PC-3 (cell line): ENCODE measurements at regions of chr17 and their contacts with region 1.

Region 1: GRCh38 chr17:48153691-48154358 is 46.3 kb downstream of the SNX11 start:
- DNase-seq: peak; percentile 64
- ATAC-seq: peak; percentile 85
- H3K4me3 ChIP-seq: no peak overlapping the region
- H3K27ac ChIP-seq: no peak overlapping the region
- H3K4me1 ChIP-seq: no peaks in the 10 kb centered on the region
- H3K27me3 ChIP-seq: peaks cover 41% of the 10 kb centered on the region
- CTCF ChIP-seq: peak; percentile 86

Region 2: GRCh38 chr17:48074315-48075081 is 79.3 kb before region 1 on chr17:
- CTCF ChIA-PET with region 1: no interaction called
- POLR2A ChIA-PET with region 1: no interaction called
- intact Hi-C with region 1: no loop called
- DNase-seq: peak; percentile 95
- ATAC-seq: peak; percentile 91
- H3K4me3 ChIP-seq: no peak overlapping the region
- H3K27ac ChIP-seq: no peak overlapping the region
- H3K4me1 ChIP-seq: no peaks in the 10 kb centered on the region
- H3K27me3 ChIP-seq: no peaks in the 10 kb centered on the region
- CTCF ChIP-seq: peak; percentile 92

Region 3: DNA sequence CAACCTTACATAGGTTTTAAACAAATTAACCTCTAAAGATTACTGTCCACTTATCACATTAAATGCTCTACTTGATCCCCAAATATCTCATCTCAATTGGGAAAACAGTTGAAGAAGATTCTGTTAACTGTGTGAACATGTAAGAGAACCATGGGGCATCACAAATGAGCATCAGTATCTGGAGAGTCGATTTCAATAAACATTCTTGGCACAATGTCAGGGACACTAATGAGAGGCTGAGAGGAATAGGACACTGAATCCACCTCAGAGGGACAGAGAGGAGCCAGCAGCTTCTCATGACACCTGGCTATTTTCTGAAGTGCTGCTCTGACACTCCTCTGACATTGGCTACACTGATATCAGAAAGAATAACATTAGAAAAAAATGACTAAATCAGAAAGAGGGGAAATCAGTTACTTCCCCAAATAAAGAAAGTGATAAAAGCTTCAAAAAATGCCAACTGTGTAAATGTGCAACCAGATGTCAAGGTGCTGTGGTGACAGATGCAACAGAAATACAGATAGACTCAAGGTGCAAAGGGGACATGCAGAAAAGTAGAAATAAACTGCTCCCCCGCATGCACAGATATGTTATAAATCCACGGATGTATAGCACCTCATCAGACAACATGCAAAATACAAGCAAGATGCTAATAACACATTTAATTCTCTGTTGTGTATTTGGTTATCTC is 21.2 kb after region 1 on chr17:
- CTCF ChIA-PET with region 1: interaction called, 11 read pairs
- POLR2A ChIA-PET with region 1: no interaction called
- intact Hi-C with region 1: no loop called
- DNase-seq: no peak
- ATAC-seq: no peak
- H3K4me3 ChIP-seq: no peak overlapping the region
- H3K27ac ChIP-seq: no peak overlapping the region
- H3K4me1 ChIP-seq: peaks cover 9% of the 10 kb centered on the region
- H3K27me3 ChIP-seq: peaks cover 4% of the 10 kb centered on the region; the same call in 1 of the 2 replicates
- CTCF ChIP-seq: no peak

Region 4: DNA sequence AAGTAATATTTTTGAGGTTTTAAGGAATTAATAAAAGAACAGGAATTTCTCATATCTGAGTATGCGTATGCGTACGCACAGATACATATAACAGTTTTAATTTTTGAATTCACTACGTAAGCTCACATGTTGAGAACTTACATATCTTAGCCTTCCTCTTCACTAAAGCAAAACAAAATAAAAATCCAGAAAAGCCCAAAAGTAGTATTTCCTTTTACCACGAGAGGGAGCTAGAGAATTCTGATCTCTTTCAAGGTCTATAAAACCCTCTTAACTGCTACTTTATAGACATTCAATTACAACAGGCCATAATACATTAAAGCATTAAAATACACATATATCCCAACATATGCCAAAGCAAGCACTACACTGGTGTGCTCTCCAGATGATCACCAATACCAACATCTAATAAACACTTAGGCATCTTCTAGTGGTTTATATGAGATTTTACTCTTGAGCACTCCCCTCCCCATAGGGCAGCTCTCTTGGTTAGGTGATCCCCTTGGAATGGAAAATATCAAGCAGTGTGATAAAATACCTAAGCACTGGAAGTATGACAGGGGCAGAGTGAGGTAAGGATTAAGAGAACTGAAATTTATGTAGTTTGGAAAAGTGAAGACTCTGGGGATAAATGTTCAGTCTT is 182.2 kb after region 1 on chr17:
- CTCF ChIA-PET with region 1: no interaction called
- POLR2A ChIA-PET with region 1: no interaction called
- intact Hi-C with region 1: loop called (anchors 2 kb)
- DNase-seq: peak; percentile 96
- ATAC-seq: peak; percentile 64
- H3K4me3 ChIP-seq: no peak overlapping the region
- H3K27ac ChIP-seq: no peak overlapping the region
- H3K4me1 ChIP-seq: peaks cover 13% of the 10 kb centered on the region
- H3K27me3 ChIP-seq: no peaks in the 10 kb centered on the region; the same call in 1 of the 2 replicates
- CTCF ChIP-seq: peak; percentile 93

Region 5: GRCh38 chr17:48374650-48375230 is 220.9 kb after region 1 on chr17:
- CTCF ChIA-PET with region 1: no interaction called
- POLR2A ChIA-PET with region 1: no interaction called
- intact Hi-C with region 1: loop called (anchors 1 kb)
- DNase-seq: peak; percentile 72
- ATAC-seq: peak; percentile 91
- H3K4me3 ChIP-seq: no peak overlapping the region
- H3K27ac ChIP-seq: no peak overlapping the region
- H3K4me1 ChIP-seq: no peaks in the 10 kb centered on the region
- H3K27me3 ChIP-seq: no peaks in the 10 kb centered on the region
- CTCF ChIP-seq: peak; percentile 89

Region 6: DNA sequence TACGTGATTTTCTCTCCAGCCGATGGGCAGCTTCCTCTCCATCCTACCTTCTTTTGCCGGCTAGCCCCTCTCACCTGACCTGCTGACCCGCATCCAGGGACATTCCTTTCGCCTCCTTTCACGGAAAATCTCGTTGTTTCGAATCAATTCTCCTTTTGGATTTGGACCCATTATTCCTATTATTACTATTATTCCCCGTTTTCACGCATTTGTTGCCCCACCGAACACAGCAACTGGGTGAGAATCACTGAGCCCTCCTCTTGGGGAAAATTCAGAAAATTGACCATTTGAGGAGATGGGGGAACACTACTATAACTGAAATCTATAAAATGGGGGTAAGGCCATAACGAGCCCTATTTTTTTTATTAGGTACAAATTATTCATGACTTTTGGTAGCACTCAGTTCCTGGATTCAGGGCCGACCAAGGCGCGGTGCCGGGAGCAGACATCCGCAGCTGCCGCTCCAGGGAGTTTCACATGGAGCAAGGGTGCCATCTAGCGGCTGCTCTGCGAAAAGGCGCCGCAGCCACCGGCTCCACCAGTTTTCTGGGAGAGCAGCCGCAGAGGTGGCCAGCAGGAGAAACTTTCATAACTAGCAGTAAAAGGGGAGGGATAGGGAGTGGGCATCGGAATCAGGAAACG is 464.6 kb after region 1 on chr17:
- CTCF ChIA-PET with region 1: no interaction called
- POLR2A ChIA-PET with region 1: no interaction called
- intact Hi-C with region 1: loop called (anchors 2 kb)
- DNase-seq: peak; percentile 97
- ATAC-seq: peak; percentile 66
- H3K4me3 ChIP-seq: peak overlapping the region; percentile 80
- H3K27ac ChIP-seq: no peak overlapping the region
- H3K4me1 ChIP-seq: peaks cover 29% of the 10 kb centered on the region
- H3K27me3 ChIP-seq: peaks cover 60% of the 10 kb centered on the region
- CTCF ChIP-seq: peak; percentile 98